CD4-positive, alpha-beta T cell (primary cell): ENCODE measurements at regions of chr1 and their contacts with region 1.

Region 1: GRCh38 chr1:66331657-66332547 is 202.1 kb upstream of the SGIP1 start:
- DNase-seq: peak in 13 of 14 experiments; percentile 23 to 80 (median 34)
- ATAC-seq: peak; percentile 22
- H3K4me3 ChIP-seq: peak overlapping the region; percentile 85
- H3K4me3 Mint-ChIP-seq: peak overlapping the region; percentile 99
- H3K27ac ChIP-seq: peak overlapping the region; percentile 48 to 82
- H3K27ac Mint-ChIP-seq: peak overlapping the region; percentile 99
- H3K4me1 ChIP-seq: peaks cover 30% of the 10 kb centered on the region
- H3K4me1 Mint-ChIP-seq: peaks cover 77% of the 10 kb centered on the region
- H3K27me3 ChIP-seq: no peaks in the 10 kb centered on the region
- H3K27me3 Mint-ChIP-seq: no peaks in the 10 kb centered on the region
- CTCF ChIP-seq: no peak

Region 2: GRCh38 chr1:66242646-66243547 is 89.0 kb before region 1 on chr1:
- CTCF ChIA-PET with region 1: interaction called, 11 read pairs
- POLR2A ChIA-PET with region 1: no interaction called
- intact Hi-C with region 1: no loop called
- DNase-seq: peak; percentile 55 to 88 (median 68)
- ATAC-seq: peak; percentile 83
- H3K4me3 ChIP-seq: no peak overlapping the region
- H3K4me3 Mint-ChIP-seq: no peak overlapping the region
- H3K27ac ChIP-seq: no peak overlapping the region
- H3K27ac Mint-ChIP-seq: no peak overlapping the region
- H3K4me1 ChIP-seq: peaks cover 37% of the 10 kb centered on the region
- H3K4me1 Mint-ChIP-seq: peaks cover 10% of the 10 kb centered on the region
- H3K27me3 ChIP-seq: no peaks in the 10 kb centered on the region
- H3K27me3 Mint-ChIP-seq: peaks cover 7% of the 10 kb centered on the region
- CTCF ChIP-seq: peak; percentile 99

Region 3: DNA sequence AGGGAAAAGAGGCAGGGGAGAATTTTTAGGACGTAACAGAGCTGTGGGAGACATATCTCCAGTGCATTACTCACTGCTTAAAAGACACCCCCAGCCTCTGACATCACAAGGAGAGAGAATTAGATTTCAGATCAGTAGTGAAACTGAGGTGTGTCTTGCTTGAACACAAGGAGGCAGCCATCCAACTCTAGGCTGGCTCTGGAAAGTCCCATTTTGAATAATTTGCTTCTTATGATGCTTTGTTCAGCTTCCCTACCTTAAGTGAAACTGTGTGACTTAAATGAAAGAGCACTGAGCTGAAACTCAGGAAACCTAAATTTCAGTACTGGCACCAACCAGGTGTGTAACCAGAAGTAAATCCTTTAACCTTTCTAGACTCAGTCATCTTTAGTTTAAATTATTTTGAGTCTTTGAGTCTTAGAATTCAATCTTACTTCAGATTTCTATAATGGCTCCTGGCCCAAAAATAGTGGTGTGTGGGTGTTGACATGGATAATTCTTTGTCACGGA is 49.5 kb before region 1 on chr1:
- CTCF ChIA-PET with region 1: interaction called, 35 read pairs
- POLR2A ChIA-PET with region 1: interaction called, 38 read pairs
- intact Hi-C with region 1: loop called in 1 of 2 experiments (anchors 1 kb)
- DNase-seq: peak in 12 of 14 experiments; percentile 17 to 92 (median 49)
- ATAC-seq: peak; percentile 95
- H3K4me3 ChIP-seq: no peak overlapping the region
- H3K4me3 Mint-ChIP-seq: peak overlapping the region; percentile 45
- H3K27ac ChIP-seq: peak overlapping the region; percentile 5 to 67
- H3K27ac Mint-ChIP-seq: peak overlapping the region; percentile 88
- H3K4me1 ChIP-seq: peaks cover 54% of the 10 kb centered on the region
- H3K4me1 Mint-ChIP-seq: peaks cover 91% of the 10 kb centered on the region
- H3K27me3 ChIP-seq: no peaks in the 10 kb centered on the region
- H3K27me3 Mint-ChIP-seq: no peaks in the 10 kb centered on the region
- CTCF ChIP-seq: no peak

Region 4: GRCh38 chr1:66300972-66301451 is 30.9 kb before region 1 on chr1:
- CTCF ChIA-PET with region 1: interaction called, 4 read pairs
- POLR2A ChIA-PET with region 1: interaction called, 25 read pairs
- intact Hi-C with region 1: loop called (anchors 1 to 2 kb)
- DNase-seq: peak in 7 of 14 experiments; percentile 9 to 78 (median 42)
- ATAC-seq: peak; percentile 87
- H3K4me3 ChIP-seq: peak overlapping the region; percentile 29
- H3K4me3 Mint-ChIP-seq: peak overlapping the region; percentile 68
- H3K27ac ChIP-seq: peak overlapping the region; percentile 33 to 61
- H3K27ac Mint-ChIP-seq: peak overlapping the region; percentile 84
- H3K4me1 ChIP-seq: peaks cover 31% of the 10 kb centered on the region
- H3K4me1 Mint-ChIP-seq: peaks cover 40% of the 10 kb centered on the region
- H3K27me3 ChIP-seq: no peaks in the 10 kb centered on the region
- H3K27me3 Mint-ChIP-seq: no peaks in the 10 kb centered on the region
- CTCF ChIP-seq: no peak

Region 5: DNA sequence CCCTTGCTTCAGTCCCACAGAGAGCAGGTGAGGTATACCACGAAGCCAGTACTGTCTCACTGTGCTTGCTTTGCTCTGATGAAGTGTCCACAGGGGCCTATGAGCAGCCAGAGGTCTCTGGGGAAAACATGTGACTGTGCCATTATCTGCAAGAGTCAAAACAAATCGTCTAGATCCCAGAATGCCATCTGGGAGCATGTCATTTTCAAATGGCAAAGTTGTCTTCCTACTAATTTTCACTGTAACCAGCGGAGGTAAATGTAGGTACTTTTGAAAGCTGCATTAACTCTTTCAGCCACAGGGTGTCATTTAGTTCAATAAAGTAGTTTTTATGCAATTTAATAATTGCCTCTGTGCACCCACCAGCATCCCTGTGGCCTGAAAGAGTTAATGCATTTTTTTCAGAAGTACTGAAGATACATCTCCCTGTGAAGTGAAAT is 28.4 kb after region 1 on chr1:
- CTCF ChIA-PET with region 1: no interaction called
- POLR2A ChIA-PET with region 1: interaction called, 15 read pairs
- intact Hi-C with region 1: no loop called
- DNase-seq: no peak
- ATAC-seq: no peak
- H3K4me3 ChIP-seq: no peak overlapping the region
- H3K4me3 Mint-ChIP-seq: no peak overlapping the region
- H3K27ac ChIP-seq: peak overlapping the region in 1 of 2 donors; percentile 16
- H3K27ac Mint-ChIP-seq: peak overlapping the region; percentile 19
- H3K4me1 ChIP-seq: peaks cover 39% of the 10 kb centered on the region
- H3K4me1 Mint-ChIP-seq: peaks cover 78% of the 10 kb centered on the region
- H3K27me3 ChIP-seq: no peaks in the 10 kb centered on the region
- H3K27me3 Mint-ChIP-seq: no peaks in the 10 kb centered on the region
- CTCF ChIP-seq: no peak